Activated CD4-positive, alpha-beta memory T cell treated with anti-CD3 and anti-CD28 coated beads for 36 hours (primary cell): ENCODE measurements at regions of chr2 and their contacts with region 1.

Region 1: GRCh38 chr2:236731878-236732580 is 162.4 kb downstream of the ACKR3 start:
- DNase-seq: no peak
- H3K4me3 Mint-ChIP-seq: no peak overlapping the region
- H3K27ac Mint-ChIP-seq: no peak overlapping the region
- H3K4me1 Mint-ChIP-seq: no peaks in the 10 kb centered on the region
- H3K27me3 Mint-ChIP-seq: peaks cover 8% of the 10 kb centered on the region

Region 2: GRCh38 chr2:235709124-235709813 is 1022.8 kb before region 1 on chr2:
- CTCF ChIA-PET with region 1: no interaction called
- POLR2A ChIA-PET with region 1: no interaction called
- intact Hi-C with region 1: loop called (anchors 10 kb)
- DNase-seq: no peak
- H3K4me3 Mint-ChIP-seq: no peak overlapping the region
- H3K27ac Mint-ChIP-seq: no peak overlapping the region
- H3K4me1 Mint-ChIP-seq: no peaks in the 10 kb centered on the region
- H3K27me3 Mint-ChIP-seq: no peaks in the 10 kb centered on the region

Region 3: DNA sequence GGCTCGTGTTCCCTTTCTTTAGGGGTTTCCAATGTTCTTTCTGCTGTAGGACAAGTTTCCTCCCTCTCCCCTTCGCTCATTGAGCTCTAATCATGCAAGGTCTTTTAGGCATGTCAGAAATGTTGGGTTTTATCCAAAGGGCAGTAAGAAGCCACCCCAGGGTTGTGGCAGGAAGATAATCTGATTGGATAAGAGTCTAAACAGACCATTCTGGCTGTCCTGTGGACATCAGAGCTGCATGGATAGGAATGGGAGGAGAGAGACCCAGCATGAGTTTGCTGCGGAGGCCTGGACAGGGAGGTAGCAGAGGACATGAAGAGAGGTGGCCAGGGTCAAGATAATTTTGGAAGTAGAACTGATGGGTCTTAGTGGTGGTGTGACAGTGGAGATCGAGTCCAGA is 74.2 kb before region 1 on chr2:
- CTCF ChIA-PET with region 1: no interaction called
- POLR2A ChIA-PET with region 1: no interaction called
- intact Hi-C with region 1: no loop called
- DNase-seq: no peak
- H3K4me3 Mint-ChIP-seq: no peak overlapping the region
- H3K27ac Mint-ChIP-seq: no peak overlapping the region
- H3K4me1 Mint-ChIP-seq: no peaks in the 10 kb centered on the region
- H3K27me3 Mint-ChIP-seq: peaks cover 27% of the 10 kb centered on the region